CD8-positive, alpha-beta T cell (primary cell): ENCODE measurements at regions of chr6 and their contacts with region 1.

Region 1: DNA sequence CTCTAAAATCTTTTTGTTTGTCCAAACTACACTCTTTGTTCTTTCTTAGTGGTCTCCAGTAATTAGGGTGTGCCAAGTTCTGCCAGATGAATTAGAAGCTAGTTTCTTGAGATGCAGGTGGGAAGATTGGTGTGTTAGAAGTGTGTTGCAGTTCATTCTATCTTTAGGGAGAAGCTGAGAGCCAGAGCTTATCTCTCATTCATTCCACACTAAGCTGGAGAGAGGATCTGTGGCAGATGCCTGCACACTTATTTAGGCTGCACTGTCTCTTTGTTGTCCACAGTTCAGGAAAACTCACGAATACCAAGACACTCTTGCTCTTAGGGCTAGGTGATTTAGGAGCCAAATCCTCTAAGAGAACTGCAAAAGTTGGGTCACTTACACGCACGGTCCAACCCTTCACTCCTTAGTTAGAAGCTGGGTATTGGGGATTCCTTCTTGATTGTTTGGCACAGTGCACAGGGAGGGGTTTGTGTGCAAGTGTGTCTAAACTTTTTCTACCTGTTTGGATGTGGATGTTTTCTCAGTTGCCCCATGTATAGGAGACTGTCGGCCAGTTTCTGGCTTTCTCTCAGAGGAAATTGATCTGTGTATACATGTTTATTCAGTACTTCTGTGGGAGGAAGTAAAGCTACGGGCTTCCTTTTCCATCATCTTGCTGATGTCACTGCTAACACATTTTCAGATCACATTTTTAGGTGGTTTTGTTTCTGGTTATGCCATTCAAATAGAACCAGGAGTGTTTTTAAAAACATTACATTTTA is 49.5 kb downstream of the SMAP1 start:
- DNase-seq: peak in 2 of 9 experiments; percentile 19 to 60
- ATAC-seq: peak; percentile 91
- H3K4me3 ChIP-seq: no peak overlapping the region
- H3K4me3 Mint-ChIP-seq: peak overlapping the region; percentile 20
- H3K27ac ChIP-seq: peak overlapping the region in 1 of 2 experiments; percentile 7
- H3K27ac Mint-ChIP-seq: peak overlapping the region; percentile 55
- H3K4me1 ChIP-seq: peaks cover 17% of the 10 kb centered on the region
- H3K4me1 Mint-ChIP-seq: peaks cover 62% of the 10 kb centered on the region
- H3K27me3 ChIP-seq: no peaks in the 10 kb centered on the region
- H3K27me3 Mint-ChIP-seq: no peaks in the 10 kb centered on the region
- CTCF ChIP-seq: no peak

Region 2: GRCh38 chr6:70706491-70707123 is 10.6 kb before region 1 on chr6:
- CTCF ChIA-PET with region 1: interaction called, 18 read pairs
- POLR2A ChIA-PET with region 1: interaction called, 3 read pairs
- intact Hi-C with region 1: no loop called
- DNase-seq: peak in 3 of 9 experiments; percentile 20 to 67 (median 58)
- ATAC-seq: no peak
- H3K4me3 ChIP-seq: no peak overlapping the region
- H3K4me3 Mint-ChIP-seq: no peak overlapping the region
- H3K27ac ChIP-seq: no peak overlapping the region
- H3K27ac Mint-ChIP-seq: no peak overlapping the region
- H3K4me1 ChIP-seq: peaks cover 5% of the 10 kb centered on the region
- H3K4me1 Mint-ChIP-seq: peaks cover 41% of the 10 kb centered on the region
- H3K27me3 ChIP-seq: no peaks in the 10 kb centered on the region
- H3K27me3 Mint-ChIP-seq: no peaks in the 10 kb centered on the region
- CTCF ChIP-seq: peak; percentile 90

Region 3: DNA sequence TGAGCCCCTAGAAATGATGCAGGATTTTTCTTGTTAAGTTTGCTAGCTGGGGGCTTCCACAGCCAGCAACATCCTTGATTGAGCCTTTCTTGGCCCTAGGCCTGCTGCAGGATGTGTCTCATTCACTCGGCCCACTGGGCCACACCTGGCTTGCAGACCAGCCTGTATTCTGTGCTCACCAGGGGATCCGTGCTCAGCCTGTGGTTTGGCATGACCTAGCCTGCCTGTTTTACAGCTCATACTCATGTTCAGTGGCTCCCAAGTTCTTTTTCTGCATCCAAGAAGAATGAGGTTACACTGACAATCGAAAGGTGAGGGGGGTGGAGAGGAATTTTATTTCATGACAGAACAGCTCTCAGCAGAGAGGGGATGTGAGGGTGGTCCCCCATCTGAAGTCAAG is 1432.5 kb after region 1 on chr6:
- CTCF ChIA-PET with region 1: no interaction called
- POLR2A ChIA-PET with region 1: no interaction called
- intact Hi-C with region 1: no loop called
- DNase-seq: no peak
- ATAC-seq: no peak
- H3K4me3 ChIP-seq: no peak overlapping the region
- H3K4me3 Mint-ChIP-seq: no peak overlapping the region
- H3K27ac ChIP-seq: no peak overlapping the region
- H3K27ac Mint-ChIP-seq: no peak overlapping the region
- H3K4me1 ChIP-seq: no peaks in the 10 kb centered on the region
- H3K4me1 Mint-ChIP-seq: no peaks in the 10 kb centered on the region
- H3K27me3 ChIP-seq: no peaks in the 10 kb centered on the region
- H3K27me3 Mint-ChIP-seq: no peaks in the 10 kb centered on the region
- CTCF ChIP-seq: no peak